Adrenal gland (tissue), 19 donors: ENCODE measurements at regions of chr17 and their contacts with region 1.

Region 1: GRCh38 chr17:50471009-50471905 is 2.6 kb upstream of the CHAD start:
- DNase-seq: peak in 1 of 7 donors; percentile 18
- H3K4me3 ChIP-seq: no peak overlapping the region
- H3K27ac ChIP-seq: peak overlapping the region in 2 of 5 donors; percentile 30 to 73
- H3K4me1 ChIP-seq: peaks cover 22% of the 10 kb centered on the region in 2 donors
- H3K27me3 ChIP-seq: no peaks in the 10 kb centered on the region
- CTCF ChIP-seq: no peak
- POLR2A ChIP-seq: no peak

Region 2: GRCh38 chr17:50355506-50356341 is 115.5 kb before region 1 on chr17:
- intact Hi-C with region 1: loop called in 1 of 2 experiments (anchors 5 kb)
- DNase-seq: peak in 4 of 7 donors; percentile 11 to 49 (median 20)
- H3K4me3 ChIP-seq: no peak overlapping the region
- H3K27ac ChIP-seq: no peak overlapping the region
- H3K4me1 ChIP-seq: peaks cover 7 to 9% of the 10 kb centered on the region in 2 donors
- H3K27me3 ChIP-seq: no peaks in the 10 kb centered on the region
- CTCF ChIP-seq: no peak
- POLR2A ChIP-seq: no peak

Region 3: DNA sequence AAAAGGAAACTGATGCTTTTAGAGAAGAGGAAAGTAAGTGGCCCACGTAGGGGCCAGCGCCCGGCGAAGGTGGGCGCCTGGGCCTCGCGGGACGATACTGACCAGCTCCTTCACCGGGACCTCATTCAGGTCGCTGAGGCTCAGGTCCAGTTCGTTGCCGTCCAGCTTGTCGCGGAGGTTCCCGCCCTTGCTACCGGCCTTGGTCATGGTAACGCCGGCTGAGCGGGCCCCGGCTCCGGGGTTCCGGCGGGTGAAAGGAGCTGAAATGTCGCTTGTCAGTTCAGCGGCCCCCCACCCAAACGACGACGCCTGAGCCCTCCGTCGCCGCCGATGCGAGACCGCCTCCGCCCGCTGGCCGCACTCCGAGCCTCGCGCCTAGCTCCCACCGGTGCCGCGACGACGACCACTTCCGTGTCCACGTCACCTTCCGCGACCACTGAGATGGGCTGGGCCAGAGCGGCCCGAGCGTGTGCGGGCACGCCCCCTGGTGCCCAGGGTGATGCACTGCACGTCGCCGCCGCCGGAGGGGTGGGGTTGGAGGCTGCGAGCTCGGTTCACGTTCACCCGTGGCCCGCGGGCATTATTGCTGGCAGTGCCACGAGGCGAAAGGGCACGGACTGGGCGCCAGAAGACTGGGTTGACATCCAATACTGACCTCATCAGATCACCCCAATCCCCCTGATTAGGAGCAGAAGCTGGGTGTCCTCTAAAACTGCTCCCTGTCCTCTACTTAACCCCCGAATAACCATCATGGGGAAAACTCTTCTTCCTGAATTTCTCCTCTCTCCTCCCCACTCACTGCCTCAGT is 73.9 kb before region 1 on chr17 and contains the start of gene LRRC59:
- intact Hi-C with region 1: no loop called
- DNase-seq: peak; percentile 86 to 93 (median 89)
- H3K4me3 ChIP-seq: peak within 1 kb of the TSS; percentile 46 to 90 (median 69)
- H3K27ac ChIP-seq: peak within 1 kb of the TSS; percentile 77 to 97 (median 94)
- H3K4me1 ChIP-seq: peaks cover 20 to 33% of the 10 kb centered on the region in 2 donors
- H3K27me3 ChIP-seq: no peaks in the 10 kb centered on the region
- CTCF ChIP-seq: peak; percentile 87 to 98 (median 93)
- POLR2A ChIP-seq: peak; percentile 75 to 79
- total RNA-seq, gene LRRC59: 88.6 to 337 (median 109) TPM